ENCODE measurements at regions of chr3 and their contacts with region 1.

Region 1: GRCh38 chr3:123723522-123724168 is 138.8 kb upstream of the HACD2 start:
- DNase-seq: peak; percentile 51 to 76
- H3K4me3 ChIP-seq: no peak overlapping the region
- H3K27ac ChIP-seq: no peak overlapping the region
- H3K4me1 ChIP-seq: peaks cover 0 to 3% (median 0%) of the 10 kb centered on the region in 4 experiments; a peak in 1 of 7 replicates
- H3K27me3 ChIP-seq: no peaks in the 10 kb centered on the region
- CTCF ChIP-seq: peak; percentile 54 to 93 (median 83)
- EP300 ChIP-seq: no peak
- POLR2A ChIP-seq: no peak; a peak in 1 of 3 replicates
- RAD21 ChIP-seq: peak; percentile 58 to 72

Region 2: GRCh38 chr3:123626881-123627280 is 96.8 kb before region 1 on chr3:
- CTCF ChIA-PET with region 1: no interaction called
- POLR2A ChIA-PET with region 1: no interaction called
- DNase-seq: no peak
- H3K4me3 ChIP-seq: no peak overlapping the region
- H3K27ac ChIP-seq: no peak overlapping the region
- H3K4me1 ChIP-seq: no peaks in the 10 kb centered on the region; a peak in 1 of 7 replicates
- H3K27me3 ChIP-seq: no peaks in the 10 kb centered on the region
- CTCF ChIP-seq: no peak
- EP300 ChIP-seq: no peak
- POLR2A ChIP-seq: no peak
- RAD21 ChIP-seq: no peak

Region 3: GRCh38 chr3:123652346-123652984 is 71.2 kb before region 1 on chr3:
- CTCF ChIA-PET with region 1: interaction called, 1,463 read pairs
- POLR2A ChIA-PET with region 1: interaction called, 4 read pairs
- DNase-seq: peak; percentile 44 to 92
- H3K4me3 ChIP-seq: no peak overlapping the region
- H3K27ac ChIP-seq: no peak overlapping the region
- H3K4me1 ChIP-seq: peaks cover 0 to 10% (median 1%) of the 10 kb centered on the region in 4 experiments; a peak in 3 of 7 replicates
- H3K27me3 ChIP-seq: no peaks in the 10 kb centered on the region
- CTCF ChIP-seq: peak; percentile 93 to 98 (median 93)
- EP300 ChIP-seq: no peak
- POLR2A ChIP-seq: no peak
- RAD21 ChIP-seq: peak; percentile 98 to 100

Region 4: GRCh38 chr3:123672429-123673146 is 51.1 kb before region 1 on chr3:
- CTCF ChIA-PET with region 1: interaction called, 1,463 read pairs
- POLR2A ChIA-PET with region 1: no interaction called
- DNase-seq: no peak
- H3K4me3 ChIP-seq: no peak overlapping the region
- H3K27ac ChIP-seq: no peak overlapping the region
- H3K4me1 ChIP-seq: no peaks in the 10 kb centered on the region
- H3K27me3 ChIP-seq: no peaks in the 10 kb centered on the region
- CTCF ChIP-seq: no peak
- EP300 ChIP-seq: no peak
- POLR2A ChIP-seq: no peak
- RAD21 ChIP-seq: no peak

Region 5: DNA sequence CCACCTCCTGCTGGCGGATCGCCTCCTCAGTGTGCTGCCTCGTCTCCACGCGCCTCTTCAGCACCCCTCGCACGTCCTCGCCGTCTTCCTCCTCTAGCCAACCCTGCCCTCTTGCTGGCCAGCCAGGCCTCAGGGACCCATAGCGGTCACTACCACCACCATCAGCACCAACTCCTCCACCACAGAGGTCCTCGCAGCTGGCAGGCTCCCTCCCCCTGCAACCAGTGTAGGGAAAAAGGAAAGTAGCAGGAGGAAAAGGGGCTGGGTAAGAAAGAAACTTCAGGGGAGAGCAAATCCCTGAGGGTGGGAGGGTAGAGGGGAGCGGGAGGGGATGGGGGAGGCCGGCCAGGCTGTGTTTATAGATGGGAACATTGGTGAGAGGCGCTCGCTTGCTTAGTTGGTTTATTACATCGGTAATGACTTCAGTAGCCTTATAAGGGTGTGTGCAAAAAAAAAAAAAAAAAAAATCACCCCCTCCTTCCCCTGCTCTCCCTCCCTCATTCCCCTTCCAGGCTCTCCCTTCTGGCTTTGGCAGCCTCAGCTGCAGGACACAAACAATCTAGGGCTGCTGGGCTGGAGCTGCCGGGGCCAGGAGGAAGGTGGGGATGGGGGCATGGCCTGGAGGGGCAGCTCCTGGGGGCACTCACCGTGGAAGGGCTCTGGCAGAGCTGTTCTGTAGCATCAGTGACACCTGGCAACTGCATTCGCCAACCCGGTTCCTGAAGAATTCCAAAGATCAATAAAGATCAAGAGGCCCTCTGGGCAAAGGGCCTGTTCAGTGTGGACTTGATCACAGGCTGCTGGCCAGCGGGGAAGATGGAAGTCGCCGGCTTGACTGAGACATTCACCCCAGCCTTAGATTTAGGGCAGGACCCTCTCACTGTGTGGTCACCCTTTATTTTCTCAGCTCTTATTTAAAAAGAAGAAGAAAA is 22.6 kb before region 1 on chr3:
- CTCF ChIA-PET with region 1: interaction called, 36 read pairs
- POLR2A ChIA-PET with region 1: no interaction called
- DNase-seq: no peak
- H3K4me3 ChIP-seq: no peak overlapping the region
- H3K27ac ChIP-seq: no peak overlapping the region
- H3K4me1 ChIP-seq: no peaks in the 10 kb centered on the region
- H3K27me3 ChIP-seq: no peaks in the 10 kb centered on the region
- CTCF ChIP-seq: no peak
- EP300 ChIP-seq: no peak
- POLR2A ChIP-seq: no peak
- RAD21 ChIP-seq: no peak

Region 6: DNA sequence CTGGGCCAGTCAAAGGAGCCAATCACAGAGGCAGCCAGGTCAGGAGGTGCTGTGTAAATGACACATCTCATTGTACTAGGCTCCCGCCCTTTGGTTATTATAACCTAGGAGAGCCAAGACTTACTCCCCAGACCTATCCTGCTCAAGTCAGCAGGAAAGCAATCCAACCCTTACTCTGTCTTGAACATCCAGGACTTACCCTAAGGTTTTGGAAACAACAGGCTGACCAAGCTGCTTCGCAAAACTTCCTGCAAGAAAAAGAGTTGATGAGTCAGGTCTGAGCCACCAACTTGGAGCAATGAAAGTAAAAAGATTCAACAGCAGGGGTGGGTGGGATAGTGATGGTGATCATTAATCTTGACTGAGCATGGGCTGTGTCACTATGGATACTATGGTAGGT is 16.1 kb after region 1 on chr3:
- CTCF ChIA-PET with region 1: interaction called, 22 read pairs
- POLR2A ChIA-PET with region 1: interaction called, 3 read pairs
- DNase-seq: no peak
- H3K4me3 ChIP-seq: no peak overlapping the region
- H3K27ac ChIP-seq: no peak overlapping the region
- H3K4me1 ChIP-seq: no peaks in the 10 kb centered on the region
- H3K27me3 ChIP-seq: no peaks in the 10 kb centered on the region
- CTCF ChIP-seq: no peak
- EP300 ChIP-seq: no peak
- POLR2A ChIP-seq: no peak
- RAD21 ChIP-seq: no peak

Measured in H1 (cell line).